HepG2 (cell line): ENCODE measurements at regions of chr10 and their contacts with region 1.

Region 1: GRCh38 chr10:75431180-75432111 is at the start of gene LRMDA:
- DNase-seq: peak; percentile 83
- ATAC-seq: peak; percentile 73
- H3K4me3 ChIP-seq: peak within 1 kb of the TSS; percentile 77 to 95 (median 79)
- H3K27ac ChIP-seq: peak within 1 kb of the TSS; percentile 92
- H3K4me1 ChIP-seq: peaks cover 84% of the 10 kb centered on the region
- H3K27me3 ChIP-seq: no peaks in the 10 kb centered on the region
- CTCF ChIP-seq: peak; percentile 20; the same call in 1 of the 2 replicates
- EP300 ChIP-seq: peak; percentile 4 to 70; a peak in 2 of 4 replicates
- POLR2A ChIP-seq: peak in 1 of 2 experiments; percentile 14; a peak in 2 of 4 replicates
- RAD21 ChIP-seq: peak; percentile 66; the same call in 1 of the 2 replicates
- total RNA-seq, gene LRMDA: 19.3 and 22.0 TPM in 2 replicates

Region 2: GRCh38 chr10:75417522-75417927 is 13.9 kb before region 1 on chr10:
- CTCF ChIA-PET with region 1: no interaction called
- POLR2A ChIA-PET with region 1: interaction called, 13 read pairs
- in situ Hi-C with region 1: no loop called
- intact Hi-C with region 1: no loop called
- DNase-seq: no peak
- ATAC-seq: peak; percentile 53
- H3K4me3 ChIP-seq: no peak overlapping the region; a peak in 1 of 6 replicates
- H3K27ac ChIP-seq: no peak overlapping the region
- H3K4me1 ChIP-seq: peaks cover 19% of the 10 kb centered on the region
- H3K27me3 ChIP-seq: no peaks in the 10 kb centered on the region; a peak in 1 of 5 replicates
- CTCF ChIP-seq: no peak
- EP300 ChIP-seq: no peak
- POLR2A ChIP-seq: no peak
- RAD21 ChIP-seq: no peak

Region 3: GRCh38 chr10:75528392-75528791 is 96.9 kb after region 1 on chr10:
- CTCF ChIA-PET with region 1: no interaction called
- POLR2A ChIA-PET with region 1: no interaction called
- in situ Hi-C with region 1: no loop called
- intact Hi-C with region 1: loop called (anchors 10 kb)
- DNase-seq: no peak
- ATAC-seq: no peak
- H3K4me3 ChIP-seq: no peak overlapping the region
- H3K27ac ChIP-seq: no peak overlapping the region
- H3K4me1 ChIP-seq: peaks cover 13% of the 10 kb centered on the region; the same call in 1 of the 2 replicates
- H3K27me3 ChIP-seq: no peaks in the 10 kb centered on the region
- CTCF ChIP-seq: no peak
- EP300 ChIP-seq: no peak
- POLR2A ChIP-seq: no peak
- RAD21 ChIP-seq: no peak

Region 4: GRCh38 chr10:75788394-75789205 is 357.2 kb after region 1 on chr10:
- CTCF ChIA-PET with region 1: no interaction called
- POLR2A ChIA-PET with region 1: interaction called, 10 read pairs
- in situ Hi-C with region 1: no loop called
- intact Hi-C with region 1: no loop called
- DNase-seq: peak; percentile 94
- ATAC-seq: peak; percentile 88
- H3K4me3 ChIP-seq: peak overlapping the region in 2 of 3 experiments; percentile 21 to 42; a peak in 2 of 6 replicates
- H3K27ac ChIP-seq: peak overlapping the region; percentile 85
- H3K4me1 ChIP-seq: peaks cover 58% of the 10 kb centered on the region
- H3K27me3 ChIP-seq: no peaks in the 10 kb centered on the region
- CTCF ChIP-seq: no peak
- EP300 ChIP-seq: peak; percentile 45 to 87; a peak in 2 of 4 replicates
- POLR2A ChIP-seq: no peak
- RAD21 ChIP-seq: no peak; the same call in 1 of the 2 replicates